ENCODE measurements at regions of chr5 and their contacts with region 1.

Region 1: DNA sequence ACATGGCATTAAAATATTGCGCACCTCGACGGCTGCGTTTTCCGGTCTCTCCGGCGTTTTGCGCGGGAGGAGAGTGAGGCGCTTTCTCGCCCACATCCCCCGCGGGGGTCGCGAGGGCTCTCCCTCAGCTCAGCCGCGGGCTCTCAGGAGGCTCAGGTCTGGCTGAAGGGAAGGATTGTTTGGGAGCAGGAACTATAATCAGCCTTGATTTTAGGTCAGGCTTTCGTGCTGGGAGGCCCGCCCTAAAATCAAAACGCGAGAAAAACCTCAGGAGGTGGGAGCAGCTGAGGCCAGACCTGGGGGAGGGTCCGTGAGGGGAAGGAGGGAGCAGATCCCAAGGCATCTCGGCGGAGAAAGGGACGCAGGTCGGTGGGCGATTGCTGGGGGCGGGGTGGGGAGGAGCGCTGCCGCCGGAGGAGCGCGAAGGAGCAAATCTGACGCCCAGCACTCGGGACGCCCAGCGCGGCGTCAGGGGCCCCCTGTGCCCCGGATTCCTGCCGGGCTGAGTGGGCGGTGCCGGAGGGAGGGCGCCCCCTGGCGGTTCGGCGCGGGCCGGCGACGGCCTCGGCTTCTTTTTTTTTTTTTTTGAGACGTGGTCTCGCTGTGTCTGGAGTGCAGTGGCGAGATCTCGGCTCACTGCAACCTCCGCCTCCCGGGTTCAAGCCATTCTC is 18.7 kb upstream of the RNF130 start:
- DNase-seq: peak; percentile 41
- ATAC-seq: peak; percentile 54
- H3K4me3 ChIP-seq: peak overlapping the region; percentile 38; the same call in 1 of the 2 replicates
- H3K27ac ChIP-seq: no peak overlapping the region
- H3K4me1 ChIP-seq: no peaks in the 10 kb centered on the region
- H3K27me3 ChIP-seq: no peaks in the 10 kb centered on the region
- CTCF ChIP-seq: peak; percentile 62

Region 2: GRCh38 chr5:179749857-179750508 is 340.2 kb before region 1 on chr5:
- CTCF ChIA-PET with region 1: no interaction called
- POLR2A ChIA-PET with region 1: no interaction called
- intact Hi-C with region 1: no loop called
- DNase-seq: no peak
- ATAC-seq: no peak
- H3K4me3 ChIP-seq: no peak overlapping the region
- H3K27ac ChIP-seq: no peak overlapping the region
- H3K4me1 ChIP-seq: no peaks in the 10 kb centered on the region
- H3K27me3 ChIP-seq: no peaks in the 10 kb centered on the region
- CTCF ChIP-seq: 0 out of 2 replicates have a peak, but pooled peaks have one; percentile 22

Region 3: GRCh38 chr5:179907570-179908324 is 182.5 kb before region 1 on chr5 and contains the start of gene TBC1D9B:
- CTCF ChIA-PET with region 1: no interaction called
- POLR2A ChIA-PET with region 1: no interaction called
- intact Hi-C with region 1: loop called (anchors 5 kb)
- DNase-seq: peak; percentile 60
- ATAC-seq: peak; percentile 88
- H3K4me3 ChIP-seq: peak within 1 kb of the TSS; percentile 87
- H3K27ac ChIP-seq: no peak within 1 kb of the TSS
- H3K4me1 ChIP-seq: peaks cover 13% of the 10 kb centered on the region
- H3K27me3 ChIP-seq: no peaks in the 10 kb centered on the region
- CTCF ChIP-seq: no peak
- total RNA-seq, gene TBC1D9B: 44.9 and 67.7 TPM in 2 replicates

Region 4: GRCh38 chr5:179986328-179986727 is 103.9 kb before region 1 on chr5:
- CTCF ChIA-PET with region 1: no interaction called
- POLR2A ChIA-PET with region 1: no interaction called
- intact Hi-C with region 1: loop called (anchors 1 kb)
- DNase-seq: peak; percentile 6
- ATAC-seq: peak; percentile 43; the same call in 1 of the 2 replicates
- H3K4me3 ChIP-seq: no peak overlapping the region
- H3K27ac ChIP-seq: no peak overlapping the region
- H3K4me1 ChIP-seq: no peaks in the 10 kb centered on the region
- H3K27me3 ChIP-seq: no peaks in the 10 kb centered on the region
- CTCF ChIP-seq: no peak

Measured in PC-3 (cell line).